Right cardiac atrium (tissue), 5 donors: ENCODE measurements at regions of chr21 and their contacts with region 1.

Region 1: GRCh38 chr21:43975495-43975993 is 36.6 kb upstream of the TRAPPC10 start:
- DNase-seq: peak; percentile 76 to 93 (median 92)
- ATAC-seq: peak; percentile 82 to 84
- H3K4me3 ChIP-seq: no peak overlapping the region
- H3K27ac ChIP-seq: no peak overlapping the region
- H3K4me1 ChIP-seq: peaks cover 3% of the 10 kb centered on the region
- H3K27me3 ChIP-seq: no peaks in the 10 kb centered on the region

Region 2: GRCh38 chr21:43805275-43805800 is 170.2 kb before region 1 on chr21:
- intact Hi-C with region 1: loop called in 1 of 4 experiments (anchors 5 kb)
- DNase-seq: peak in 2 of 3 donors; percentile 37 to 41
- ATAC-seq: no peak
- H3K4me3 ChIP-seq: no peak overlapping the region
- H3K27ac ChIP-seq: no peak overlapping the region
- H3K4me1 ChIP-seq: no peaks in the 10 kb centered on the region
- H3K27me3 ChIP-seq: no peaks in the 10 kb centered on the region